Testis (tissue), 5 donors: ENCODE measurements at regions of chr10 and their contacts with region 1.

Region 1: DNA sequence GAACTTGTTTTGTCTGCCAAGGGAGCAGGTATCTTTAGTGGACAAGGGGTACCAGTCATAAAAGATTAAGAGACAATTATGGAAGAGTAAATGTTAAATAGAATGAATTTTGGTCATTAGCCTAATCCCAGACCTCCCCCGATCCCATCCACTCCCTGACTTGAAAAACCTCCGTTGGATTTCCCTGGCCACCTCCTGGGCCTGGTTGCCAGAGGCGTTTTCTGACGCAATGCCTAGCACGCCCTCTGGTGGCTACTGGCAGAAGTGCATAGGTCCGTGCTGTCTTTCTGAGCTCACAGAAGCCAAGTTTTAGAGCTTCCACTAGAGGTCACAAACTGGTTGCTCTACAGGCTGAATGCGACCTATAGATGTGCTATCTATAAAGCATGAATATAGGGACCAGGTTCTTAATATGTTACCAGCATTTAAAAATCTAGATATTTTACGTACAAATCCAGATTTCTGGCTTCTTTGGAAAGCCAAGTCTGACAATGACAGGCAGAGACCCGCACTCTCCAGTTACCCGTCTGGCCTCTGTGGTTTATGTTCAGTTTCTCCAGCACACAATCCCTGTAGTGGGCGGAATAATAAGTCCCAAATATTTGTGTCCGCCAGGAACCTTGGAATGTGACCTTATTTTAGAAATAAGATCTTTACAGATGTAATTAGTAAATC is 39.8 kb downstream of the SPOCK2 start:
- DNase-seq: peak; percentile 97
- H3K4me3 ChIP-seq: no peak overlapping the region
- H3K27ac ChIP-seq: no peak overlapping the region
- H3K4me1 ChIP-seq: peaks cover 19% of the 10 kb centered on the region
- H3K27me3 ChIP-seq: no peaks in the 10 kb centered on the region
- CTCF ChIP-seq: peak; percentile 100
- POLR2A ChIP-seq: no peak

Region 2: GRCh38 chr10:71888623-71889387 is 159.8 kb before region 1 on chr10:
- intact Hi-C with region 1: no loop called
- DNase-seq: peak; percentile 83
- H3K4me3 ChIP-seq: peak overlapping the region; percentile 56 to 59
- H3K27ac ChIP-seq: peak overlapping the region; percentile 16 to 81
- H3K4me1 ChIP-seq: peaks cover 14% of the 10 kb centered on the region
- H3K27me3 ChIP-seq: no peaks in the 10 kb centered on the region
- CTCF ChIP-seq: no peak
- POLR2A ChIP-seq: no peak

Region 3: GRCh38 chr10:71899665-71900412 is 148.7 kb before region 1 on chr10:
- intact Hi-C with region 1: loop called (anchors 5 kb)
- DNase-seq: no peak
- H3K4me3 ChIP-seq: no peak overlapping the region
- H3K27ac ChIP-seq: no peak overlapping the region
- H3K4me1 ChIP-seq: no peaks in the 10 kb centered on the region
- H3K27me3 ChIP-seq: no peaks in the 10 kb centered on the region
- CTCF ChIP-seq: no peak
- POLR2A ChIP-seq: no peak

Region 4: GRCh38 chr10:71963756-71964668 is 84.6 kb before region 1 on chr10 and contains the start of gene CHST3:
- intact Hi-C with region 1: loop called (anchors 10 kb)
- DNase-seq: peak; percentile 69
- H3K4me3 ChIP-seq: peak within 1 kb of the TSS; percentile 73 to 86
- H3K27ac ChIP-seq: peak within 1 kb of the TSS; percentile 94 to 97
- H3K4me1 ChIP-seq: peaks cover 36% of the 10 kb centered on the region
- H3K27me3 ChIP-seq: no peaks in the 10 kb centered on the region
- CTCF ChIP-seq: no peak
- POLR2A ChIP-seq: no peak
- total RNA-seq, gene CHST3: 107 to 218 TPM